Heart right ventricle (tissue), 16 donors: ENCODE measurements at regions of chr16 and their contacts with region 1.

Region 1: GRCh38 chr16:55543472-55543871 is 23.0 kb upstream of the CAPNS2 start:
- DNase-seq: no peak
- ATAC-seq: peak in 4 of 8 donors; percentile 31 to 75 (median 39)
- H3K4me3 ChIP-seq: no peak overlapping the region
- H3K27ac ChIP-seq: no peak overlapping the region
- H3K4me1 ChIP-seq: peaks cover 0 to 42% (median 0%) of the 10 kb centered on the region in 9 donors
- H3K27me3 ChIP-seq: no peaks in the 10 kb centered on the region
- CTCF ChIP-seq: peak; percentile 18 to 69 (median 41)

Region 2: DNA sequence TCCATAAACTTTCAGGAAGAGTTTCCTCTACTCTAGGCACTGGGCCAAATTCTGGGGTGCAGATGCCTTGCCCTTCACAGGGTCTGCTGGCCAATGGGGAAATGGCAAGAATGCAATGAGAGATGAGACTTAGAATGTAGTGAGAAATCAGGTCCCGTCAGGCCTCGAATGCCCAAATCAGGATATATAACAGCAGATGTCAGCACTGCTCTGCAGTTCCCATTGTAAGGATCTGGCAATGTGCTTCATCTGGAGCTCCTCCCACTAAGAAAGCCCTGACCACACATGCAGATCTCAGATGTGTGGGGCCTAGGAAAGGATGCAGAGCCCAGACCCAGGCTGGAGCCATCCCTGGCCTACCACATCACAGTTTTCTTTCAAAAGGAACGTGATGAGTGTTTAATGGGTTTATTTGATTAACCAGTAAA is 48.5 kb before region 1 on chr16:
- intact Hi-C with region 1: loop called in 7 of 10 experiments (anchors 1 to 10 kb)
- DNase-seq: peak in 1 of 2 donors; percentile 68
- ATAC-seq: peak; percentile 72 to 93 (median 88)
- H3K4me3 ChIP-seq: no peak overlapping the region
- H3K27ac ChIP-seq: peak overlapping the region in 1 of 10 donors; percentile 31
- H3K4me1 ChIP-seq: peaks cover 0 to 36% (median 20%) of the 10 kb centered on the region in 9 donors
- H3K27me3 ChIP-seq: no peaks in the 10 kb centered on the region
- CTCF ChIP-seq: peak; percentile 22 to 74 (median 56)

Region 3: DNA sequence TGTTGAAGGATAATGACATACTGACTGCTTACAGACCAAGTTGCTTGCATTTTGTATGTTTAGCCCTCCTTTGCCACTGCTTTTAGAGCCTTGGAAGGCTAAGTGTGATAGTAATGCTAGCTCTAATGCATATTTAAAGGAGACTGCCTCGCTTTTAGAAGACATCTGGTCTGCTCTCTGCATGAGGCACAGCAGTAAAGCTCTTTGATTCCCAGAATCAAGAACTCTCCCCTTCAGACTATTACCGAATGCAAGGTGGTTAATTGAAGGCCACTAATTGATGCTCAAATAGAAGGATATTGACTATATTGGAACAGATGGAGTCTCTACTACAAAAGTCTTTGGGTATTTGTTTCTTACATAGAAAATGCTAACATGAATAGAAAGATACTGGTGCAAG is 42.2 kb after region 1 on chr16:
- intact Hi-C with region 1: loop called in 1 of 10 experiments (anchors 10 kb)
- DNase-seq: no peak
- ATAC-seq: no peak
- H3K4me3 ChIP-seq: no peak overlapping the region
- H3K27ac ChIP-seq: no peak overlapping the region
- H3K4me1 ChIP-seq: no peaks in the 10 kb centered on the region
- H3K27me3 ChIP-seq: no peaks in the 10 kb centered on the region
- CTCF ChIP-seq: no peak

Region 4: DNA sequence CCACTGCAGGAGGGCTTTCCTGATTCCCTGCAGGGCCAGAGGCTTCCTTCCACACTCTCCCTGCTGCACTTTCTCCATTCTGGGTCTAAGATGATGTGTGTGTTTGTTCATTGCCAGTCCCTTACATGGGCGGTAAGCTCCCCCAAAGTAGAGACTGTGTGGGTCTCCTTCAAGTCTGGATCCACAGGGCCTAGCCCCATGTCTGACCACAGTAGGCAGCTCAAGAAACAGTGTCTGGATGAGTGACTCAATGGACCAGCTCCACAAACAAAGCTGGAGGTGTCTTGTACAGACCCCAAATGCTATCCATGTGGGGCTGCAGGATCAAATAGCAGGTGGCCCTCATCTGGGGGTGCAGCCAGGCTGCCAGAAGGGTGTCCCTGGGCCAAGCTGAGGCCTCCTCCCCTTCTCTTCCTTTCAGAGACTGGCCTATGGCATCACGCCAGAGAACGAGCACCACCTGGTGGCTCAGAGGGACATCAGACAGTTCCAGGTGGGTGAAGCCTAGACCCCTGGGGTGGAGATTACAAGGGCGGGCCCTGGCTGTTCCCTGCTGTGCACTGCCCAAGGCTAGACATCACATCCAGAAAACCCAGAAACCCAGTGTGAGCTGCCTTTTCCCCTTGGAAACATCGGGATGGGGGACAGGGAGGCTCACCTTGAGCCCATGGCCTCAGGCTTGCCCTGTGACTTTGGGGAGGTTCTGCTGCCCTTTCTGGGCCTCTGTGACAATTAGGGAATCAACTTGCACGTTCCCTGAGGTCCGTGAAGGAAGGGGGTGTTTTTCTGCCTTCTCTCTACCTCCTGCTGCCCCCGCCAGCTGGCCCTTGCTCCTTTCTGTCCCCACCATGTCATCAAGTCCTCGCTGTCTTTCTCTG is 158.2 kb after region 1 on chr16:
- intact Hi-C with region 1: loop called in 7 of 10 experiments (anchors 2 to 10 kb)
- DNase-seq: peak; percentile 36 to 61
- ATAC-seq: peak; percentile 24 to 88 (median 70)
- H3K4me3 ChIP-seq: no peak overlapping the region
- H3K27ac ChIP-seq: no peak overlapping the region
- H3K4me1 ChIP-seq: peaks cover 0 to 5% (median 0%) of the 10 kb centered on the region in 9 donors
- H3K27me3 ChIP-seq: peaks cover 0 to 16% (median 3%) of the 10 kb centered on the region in 7 donors
- CTCF ChIP-seq: peak; percentile 28 to 72 (median 67)